ENCODE measurements at regions of chr20 and their contacts with region 1.

Region 1: DNA sequence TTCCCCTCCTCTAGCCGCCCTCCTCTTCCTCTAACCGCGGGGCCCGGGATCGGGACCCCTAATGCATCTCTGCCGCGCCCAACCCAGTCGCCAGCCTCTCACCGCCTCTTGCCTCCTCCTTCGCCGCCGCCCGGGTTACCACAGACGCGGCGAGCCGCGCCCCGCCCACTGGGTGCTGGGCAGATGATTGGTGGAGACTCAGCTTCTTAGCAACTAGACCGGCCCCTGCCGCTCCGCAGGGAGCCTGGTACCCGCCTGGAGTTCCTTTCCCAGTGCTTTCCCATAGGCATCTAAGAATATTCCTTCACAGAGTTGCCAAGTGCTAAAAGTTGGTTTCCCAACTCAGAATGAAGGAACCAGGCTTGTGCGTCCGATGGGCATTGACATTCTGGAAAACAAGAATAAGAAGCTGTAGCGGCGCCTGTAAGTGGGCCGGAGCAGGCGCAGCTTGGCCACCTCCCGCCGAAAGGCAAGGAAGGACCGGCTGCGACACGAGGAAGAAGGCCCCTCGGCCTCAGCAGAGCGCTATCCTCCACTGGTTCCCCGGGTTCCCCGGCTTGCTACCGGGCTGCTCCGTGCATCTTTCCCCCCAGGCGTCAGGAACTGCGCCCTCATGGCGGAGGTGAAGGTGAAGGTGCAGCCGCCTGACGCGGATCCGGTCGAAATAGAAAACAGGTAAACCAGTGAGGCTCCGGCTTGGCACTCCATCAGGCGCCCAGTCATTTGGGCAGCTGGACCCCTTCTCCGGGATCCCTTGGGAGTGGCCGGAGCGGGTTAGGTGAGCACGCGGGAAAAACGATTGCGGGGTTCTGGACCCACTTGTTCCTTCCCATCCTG is at the starts of genes DZANK1 and POLR3F:
- DNase-seq: peak; percentile 83 to 97
- H3K4me3 ChIP-seq: peak within 1 kb of the TSS; percentile 67 to 89
- H3K27ac ChIP-seq: peak within 1 kb of the TSS; percentile 81 to 90
- H3K4me1 ChIP-seq: peaks cover 0 to 7% of the 10 kb centered on the region in 2 donors
- H3K27me3 ChIP-seq: no peaks in the 10 kb centered on the region
- CTCF ChIP-seq: no peak
- total RNA-seq, gene DZANK1: 1.3 TPM
- total RNA-seq, gene POLR3F: 14.0 TPM

Region 2: DNA sequence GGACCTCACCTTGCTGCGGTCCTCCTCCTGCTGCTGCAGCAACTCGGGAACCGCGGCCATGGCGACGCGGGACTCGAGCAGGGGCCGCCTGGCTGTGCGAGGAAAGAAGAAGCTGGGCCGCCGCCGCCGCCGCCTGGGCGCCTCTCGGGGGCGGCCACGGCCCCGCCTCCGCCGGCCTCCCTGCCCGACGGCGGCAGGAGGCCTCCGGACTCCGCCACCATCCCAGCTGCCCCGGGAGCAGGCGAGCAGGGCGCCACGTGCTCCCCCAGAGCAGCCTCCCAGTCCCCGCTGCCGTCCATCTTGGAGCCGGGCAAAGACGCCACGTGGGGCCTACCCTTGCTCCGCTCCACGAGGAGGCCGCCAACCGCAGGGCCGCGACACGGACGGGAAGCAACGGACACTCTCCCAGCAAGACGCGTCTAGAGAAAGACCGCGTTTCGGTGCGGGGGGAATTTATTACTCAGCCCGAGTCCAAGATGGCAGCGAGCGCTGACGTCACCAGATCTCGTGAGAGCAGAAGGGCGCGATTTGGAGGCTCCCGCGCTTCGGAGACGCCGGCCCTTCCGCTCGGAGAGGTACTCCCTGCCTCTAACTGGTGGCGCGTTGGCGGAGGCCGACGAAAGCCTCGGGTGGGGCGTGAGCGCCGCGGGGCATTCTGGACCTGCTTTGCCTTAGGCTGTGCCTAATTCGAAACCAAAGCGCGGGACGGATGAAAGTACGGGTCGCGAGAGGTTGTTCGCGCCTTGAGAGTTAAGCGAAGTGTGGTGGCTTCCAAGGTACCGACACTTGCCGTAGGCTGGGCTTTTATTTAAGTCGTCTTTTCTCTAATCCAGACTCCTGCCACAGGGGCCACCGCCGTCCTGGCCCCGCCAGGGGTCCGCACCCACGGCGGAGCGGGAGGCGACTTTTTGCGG is 498.5 kb before region 1 on chr20 and contains the starts of genes MGME1 and SNX5:
- intact Hi-C with region 1: loop called (anchors 2 kb)
- DNase-seq: peak; percentile 99 to 100
- H3K4me3 ChIP-seq: peak within 1 kb of the TSS; percentile 79 to 84
- H3K27ac ChIP-seq: peak within 1 kb of the TSS; percentile 94 to 96
- H3K4me1 ChIP-seq: peaks cover 4 to 31% of the 10 kb centered on the region in 2 donors
- H3K27me3 ChIP-seq: no peaks in the 10 kb centered on the region
- CTCF ChIP-seq: no peak
- total RNA-seq, gene MGME1: 0.85 TPM
- total RNA-seq, gene SNX5: 32.7 TPM

Region 3: DNA sequence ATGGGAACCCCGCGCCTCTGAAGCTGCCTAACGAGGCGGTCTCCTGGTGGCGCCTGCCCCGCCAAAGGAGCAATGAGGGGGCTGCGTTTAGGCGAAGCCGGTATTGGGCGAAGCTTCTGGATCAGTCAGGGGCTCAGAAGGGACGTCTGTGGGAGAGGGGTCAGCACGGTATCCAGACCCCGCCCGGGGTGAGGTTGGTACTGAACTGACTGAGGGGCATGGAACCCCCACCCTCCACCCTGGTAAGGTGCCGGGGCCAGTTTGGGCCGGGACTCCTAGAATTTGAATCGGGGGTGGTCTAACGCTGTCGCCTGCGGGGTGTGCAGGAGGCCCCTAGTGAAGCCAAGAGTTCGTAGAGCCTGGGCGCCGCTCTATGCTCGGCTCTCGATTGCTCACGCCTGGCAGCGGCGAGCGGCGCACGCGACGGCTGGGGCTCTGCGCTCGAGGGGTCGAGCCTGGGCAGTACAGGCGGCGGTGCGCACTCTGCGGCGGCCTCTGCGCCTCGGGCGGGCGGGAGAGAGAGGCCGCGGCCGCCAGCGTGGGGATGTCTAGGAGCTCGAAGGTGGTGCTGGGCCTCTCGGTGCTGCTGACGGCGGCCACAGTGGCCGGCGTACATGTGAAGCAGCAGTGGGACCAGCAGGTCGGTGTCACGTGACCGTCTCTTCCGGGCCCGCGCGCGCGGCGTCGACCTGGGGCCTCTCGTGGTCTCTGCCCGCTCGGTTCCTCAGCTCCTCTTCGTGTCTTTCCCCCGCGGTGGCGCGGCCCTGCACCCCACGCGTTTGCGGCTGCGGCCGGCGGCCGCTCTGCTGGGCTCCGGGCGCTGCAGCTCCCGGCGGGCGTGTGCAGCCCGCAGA is 329.5 kb before region 1 on chr20 and contains the starts of genes KAT14 and PET117:
- intact Hi-C with region 1: loop called (anchors 5 kb)
- DNase-seq: peak; percentile 36 to 92
- H3K4me3 ChIP-seq: peak within 1 kb of the TSS; percentile 76 to 81
- H3K27ac ChIP-seq: peak within 1 kb of the TSS; percentile 88
- H3K4me1 ChIP-seq: peaks cover 3 to 18% of the 10 kb centered on the region in 2 donors
- H3K27me3 ChIP-seq: no peaks in the 10 kb centered on the region
- CTCF ChIP-seq: no peak
- total RNA-seq, gene KAT14: 1.7 TPM
- total RNA-seq, gene PET117: 37.1 TPM

Region 4: DNA sequence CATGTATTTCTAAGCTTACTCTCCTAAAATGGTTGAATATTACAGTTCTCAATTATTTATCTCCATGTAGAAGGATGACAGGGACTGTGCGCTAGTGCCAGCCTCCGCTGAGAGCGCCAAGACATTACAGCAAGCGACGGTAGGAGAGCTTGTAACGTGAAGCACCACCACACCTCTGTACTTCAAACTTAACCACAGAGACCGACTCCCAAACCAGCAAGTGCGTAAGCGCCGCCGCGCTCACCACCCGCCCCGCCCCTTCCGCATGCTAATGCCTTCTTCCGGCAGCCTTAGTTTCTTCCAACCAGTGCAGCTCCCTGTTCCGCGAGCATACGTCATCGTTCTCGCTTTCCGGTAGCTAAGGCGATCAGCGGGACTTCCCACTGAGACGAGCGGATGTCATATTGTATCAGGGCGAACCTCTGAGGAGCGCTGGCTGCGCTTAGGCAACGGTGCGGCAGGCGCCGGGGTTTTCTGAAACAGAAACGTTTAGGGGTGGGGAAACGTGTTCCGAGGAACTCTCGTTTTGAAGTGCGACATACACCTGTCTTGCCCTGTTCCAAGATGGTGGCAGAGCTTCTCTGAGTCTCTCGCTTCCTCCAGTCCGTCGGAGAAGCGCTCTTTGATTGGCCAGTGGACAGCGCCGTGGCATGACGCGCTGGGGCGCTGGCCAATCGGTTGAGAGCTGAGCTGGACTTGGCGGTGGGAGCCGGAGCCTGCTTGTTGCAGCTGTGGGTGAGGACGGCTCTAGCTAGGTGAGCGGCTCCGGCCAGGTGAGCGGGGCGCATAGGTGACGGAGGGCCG is 40.3 kb after region 1 on chr20 and contains the start of gene SEC23B:
- intact Hi-C with region 1: loop called (anchors 1 kb)
- DNase-seq: peak; percentile 94 to 99
- H3K4me3 ChIP-seq: peak within 1 kb of the TSS; percentile 64 to 78
- H3K27ac ChIP-seq: peak within 1 kb of the TSS; percentile 88 to 94
- H3K4me1 ChIP-seq: peaks cover 4 to 11% of the 10 kb centered on the region in 2 donors
- H3K27me3 ChIP-seq: no peaks in the 10 kb centered on the region
- CTCF ChIP-seq: no peak
- total RNA-seq, gene SEC23B: 21.8 TPM

Region 5: DNA sequence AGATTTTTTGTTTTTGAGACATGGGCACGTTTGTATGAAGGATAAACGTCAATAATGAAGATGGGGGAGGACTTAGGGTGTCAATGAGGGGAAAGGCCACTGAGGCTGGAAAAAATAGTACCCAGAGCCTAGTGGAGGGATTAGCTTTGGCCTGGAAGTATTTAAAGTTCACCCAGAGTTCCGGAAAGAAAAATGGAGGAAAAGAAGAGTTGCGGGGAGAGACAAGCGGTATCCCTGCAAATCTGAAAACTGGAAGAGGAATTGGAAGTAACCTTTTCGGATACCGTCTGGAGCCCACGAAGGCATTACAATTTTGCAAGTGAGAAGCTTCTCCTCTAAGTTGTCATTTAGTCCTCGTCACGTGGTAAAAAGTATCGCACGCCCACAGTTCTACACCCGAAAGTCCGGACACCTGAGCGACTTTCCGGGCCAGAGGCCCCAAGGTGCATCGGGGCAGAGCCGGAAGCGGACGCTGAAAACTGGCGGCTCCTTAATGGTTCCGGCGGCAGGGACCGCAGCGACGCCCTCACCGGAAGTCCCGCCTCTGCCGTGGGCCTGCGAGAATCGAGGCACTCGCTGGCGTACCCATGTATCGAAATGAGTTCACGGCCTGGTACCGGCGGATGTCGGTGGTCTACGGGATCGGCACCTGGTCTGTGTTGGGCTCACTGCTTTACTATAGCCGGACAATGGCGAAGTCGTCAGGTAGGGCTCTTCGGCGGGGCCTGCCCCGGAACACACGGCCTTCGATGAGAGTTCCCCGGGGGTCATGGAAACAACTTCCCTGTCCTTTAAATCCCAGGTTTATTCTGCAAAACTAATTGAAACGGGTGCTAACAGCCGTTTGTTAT is 100.0 kb after region 1 on chr20 and contains the start of gene SMIM26:
- intact Hi-C with region 1: loop called (anchors 1 kb)
- DNase-seq: peak; percentile 43 to 96
- H3K4me3 ChIP-seq: peak within 1 kb of the TSS; percentile 73 to 86
- H3K27ac ChIP-seq: peak within 1 kb of the TSS; percentile 80 to 93
- H3K4me1 ChIP-seq: peaks cover 0 to 10% of the 10 kb centered on the region in 2 donors
- H3K27me3 ChIP-seq: no peaks in the 10 kb centered on the region
- CTCF ChIP-seq: no peak
- total RNA-seq, gene SMIM26: 67.7 TPM

Region 6: GRCh38 chr20:18587665-18588573 is 120.8 kb after region 1 on chr20 and contains the start of gene DTD1:
- intact Hi-C with region 1: loop called (anchors 2 kb)
- DNase-seq: peak; percentile 67 to 97
- H3K4me3 ChIP-seq: peak within 1 kb of the TSS; percentile 83 to 98
- H3K27ac ChIP-seq: peak within 1 kb of the TSS; percentile 75 to 83
- H3K4me1 ChIP-seq: peaks cover 0 to 15% of the 10 kb centered on the region in 2 donors
- H3K27me3 ChIP-seq: no peaks in the 10 kb centered on the region
- CTCF ChIP-seq: peak; percentile 65 to 67 (median 66)
- total RNA-seq, gene DTD1: 34.9 TPM

Region 7: GRCh38 chr20:18793625-18794427 is 326.7 kb after region 1 on chr20:
- intact Hi-C with region 1: loop called (anchors 2 kb)
- DNase-seq: peak; percentile 71 to 94
- H3K4me3 ChIP-seq: peak overlapping the region; percentile 63 to 79
- H3K27ac ChIP-seq: peak overlapping the region; percentile 78 to 80
- H3K4me1 ChIP-seq: peaks cover 0 to 3% of the 10 kb centered on the region in 2 donors
- H3K27me3 ChIP-seq: no peaks in the 10 kb centered on the region
- CTCF ChIP-seq: peak in 1 of 3 experiments; percentile 17

Measured in ascending aorta (tissue), 2 donors.